Activated CD4-positive, alpha-beta T cell treated with anti-CD3 and anti-CD28 coated beads, Interleukin-2, amount 10 ng/mL, durations not matched to agents 7 days and 5 days (primary cell): ENCODE measurements at regions of chr18 and their contacts with region 1.

Region 1: GRCh38 chr18:77000527-77000926 is 132.1 kb downstream of the MBP start:
- DNase-seq: peak; percentile 52
- H3K4me3 Mint-ChIP-seq: no peak overlapping the region
- H3K27ac Mint-ChIP-seq: peak overlapping the region; percentile 64
- H3K4me1 Mint-ChIP-seq: peaks cover 54% of the 10 kb centered on the region
- H3K27me3 Mint-ChIP-seq: peaks cover 4% of the 10 kb centered on the region

Region 2: GRCh38 chr18:76982841-76983587 is 17.5 kb before region 1 on chr18:
- CTCF ChIA-PET with region 1: interaction called, 23 read pairs
- POLR2A ChIA-PET with region 1: no interaction called
- DNase-seq: peak; percentile 87
- H3K4me3 Mint-ChIP-seq: no peak overlapping the region
- H3K27ac Mint-ChIP-seq: no peak overlapping the region
- H3K4me1 Mint-ChIP-seq: peaks cover 4% of the 10 kb centered on the region
- H3K27me3 Mint-ChIP-seq: no peaks in the 10 kb centered on the region

Region 3: DNA sequence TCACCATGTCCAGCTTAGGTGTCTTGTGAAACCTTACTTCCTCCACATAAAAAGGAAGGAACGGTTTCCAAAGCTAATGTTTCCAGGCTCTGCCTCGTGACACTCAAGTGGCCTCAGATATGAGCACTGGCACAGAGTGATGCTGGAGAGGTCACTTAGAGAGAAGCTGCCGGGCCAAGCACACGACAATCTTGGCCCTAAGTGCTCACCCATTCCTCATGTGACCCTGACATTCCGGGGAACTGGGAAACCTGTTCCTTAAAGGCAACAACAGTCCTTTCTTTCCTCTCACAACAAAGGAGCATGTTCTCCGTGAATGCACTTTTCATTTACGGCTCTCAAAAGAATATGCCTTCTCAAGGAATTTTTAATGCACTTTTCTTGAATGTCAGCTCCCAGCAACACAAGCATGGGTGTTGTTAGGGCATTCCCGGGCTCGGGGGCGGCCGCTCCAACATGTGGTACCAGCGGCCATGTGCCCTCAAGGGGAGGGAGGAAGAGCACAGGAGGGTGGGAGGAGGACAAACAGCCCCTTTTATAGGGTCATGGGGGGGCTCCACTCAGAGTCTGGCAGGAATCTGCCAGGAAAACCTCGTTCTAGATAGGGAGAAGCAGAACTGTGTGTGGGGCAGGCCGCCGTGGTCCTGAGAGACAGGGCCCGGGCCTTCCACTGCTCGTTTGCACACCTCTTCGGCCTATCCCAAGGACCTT is 13.4 kb after region 1 on chr18:
- CTCF ChIA-PET with region 1: interaction called, 23 read pairs
- POLR2A ChIA-PET with region 1: no interaction called
- DNase-seq: no peak
- H3K4me3 Mint-ChIP-seq: no peak overlapping the region
- H3K27ac Mint-ChIP-seq: no peak overlapping the region
- H3K4me1 Mint-ChIP-seq: peaks cover 14% of the 10 kb centered on the region
- H3K27me3 Mint-ChIP-seq: no peaks in the 10 kb centered on the region

Region 4: DNA sequence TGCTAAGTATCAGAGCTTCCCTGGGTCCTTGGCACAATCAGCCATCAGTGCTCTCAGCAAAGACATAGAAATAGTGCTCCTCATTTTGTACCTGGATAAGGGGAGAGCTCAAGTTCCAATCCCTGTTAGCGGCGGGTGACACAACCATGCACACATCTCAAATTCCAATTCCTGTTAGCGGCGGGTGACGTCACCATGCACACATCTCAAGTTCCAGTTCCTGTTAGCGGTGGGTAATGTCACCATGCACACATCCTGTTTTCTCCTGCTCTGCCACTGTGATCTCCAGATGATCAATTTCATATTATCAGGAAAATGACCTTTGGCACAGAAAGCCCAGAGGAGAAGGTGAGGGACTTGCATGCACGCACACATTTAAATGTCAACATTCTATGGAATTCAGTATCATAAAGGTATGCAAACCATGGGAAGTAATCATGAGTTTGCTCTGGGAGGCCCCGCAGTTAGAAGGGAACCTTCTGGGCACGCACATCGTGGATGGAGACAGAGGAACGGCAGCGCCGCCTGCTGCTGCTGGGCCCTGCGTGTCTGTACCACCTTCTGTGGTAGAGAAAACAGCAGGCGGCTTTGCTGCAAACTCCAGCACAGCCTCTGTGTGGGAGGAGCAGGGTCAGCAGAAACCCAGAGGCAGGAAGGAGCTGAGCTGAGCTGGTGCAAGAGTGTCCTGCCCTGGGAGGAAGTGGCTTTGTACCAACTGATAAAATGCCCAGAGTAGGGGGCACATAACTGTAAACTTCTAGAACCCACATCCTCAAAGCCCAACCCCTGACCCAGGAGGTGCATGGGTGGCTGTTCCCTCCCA is 54.3 kb after region 1 on chr18:
- CTCF ChIA-PET with region 1: interaction called, 11 read pairs
- POLR2A ChIA-PET with region 1: no interaction called
- DNase-seq: peak; percentile 89
- H3K4me3 Mint-ChIP-seq: peak overlapping the region; percentile 80
- H3K27ac Mint-ChIP-seq: peak overlapping the region; percentile 97
- H3K4me1 Mint-ChIP-seq: peaks cover 76% of the 10 kb centered on the region
- H3K27me3 Mint-ChIP-seq: no peaks in the 10 kb centered on the region

Region 5: GRCh38 chr18:77210249-77210648 is 209.7 kb after region 1 on chr18:
- CTCF ChIA-PET with region 1: interaction called, 18 read pairs
- POLR2A ChIA-PET with region 1: no interaction called
- DNase-seq: no peak
- H3K4me3 Mint-ChIP-seq: peak overlapping the region; percentile 77
- H3K27ac Mint-ChIP-seq: peak overlapping the region; percentile 84
- H3K4me1 Mint-ChIP-seq: peaks cover 55% of the 10 kb centered on the region
- H3K27me3 Mint-ChIP-seq: no peaks in the 10 kb centered on the region